B cell (primary cell): ENCODE measurements at regions of chr2 and their contacts with region 1.

Region 1: DNA sequence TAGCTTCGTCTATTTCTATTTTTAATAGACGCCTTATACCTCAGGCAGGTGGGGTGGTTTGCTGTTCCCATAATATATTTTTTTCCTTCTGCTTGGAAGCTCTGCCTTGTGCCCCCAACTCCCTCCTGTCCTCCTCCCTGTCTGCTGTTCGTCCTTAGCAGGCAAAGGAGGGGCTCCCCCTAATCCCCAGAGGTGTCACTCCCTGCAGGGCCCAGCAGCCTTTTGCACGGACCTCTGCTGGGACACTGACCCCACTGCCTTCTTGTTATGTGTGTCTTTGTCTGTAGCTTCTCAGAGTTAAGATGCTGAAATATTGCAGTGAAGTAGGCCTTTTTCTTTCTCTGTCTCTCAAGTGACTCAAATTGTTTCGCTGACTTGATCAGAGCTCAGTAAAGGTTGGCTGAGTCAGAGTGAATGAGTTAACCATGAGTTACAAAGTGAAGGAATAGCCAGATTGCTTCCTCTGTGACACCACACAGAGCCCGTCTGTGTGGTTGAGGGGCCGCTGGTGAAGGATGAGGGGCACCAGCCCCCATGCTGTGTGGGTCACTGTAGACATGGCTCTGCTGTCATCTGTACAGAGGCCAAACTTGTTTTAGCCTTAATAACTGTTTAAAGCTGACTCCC is 47.7 kb downstream of the PRKCE start:
- DNase-seq: no peak
- ATAC-seq: peak; percentile 13
- H3K4me3 ChIP-seq: no peak overlapping the region
- H3K4me3 Mint-ChIP-seq: peak overlapping the region; percentile 75
- H3K27ac ChIP-seq: peak overlapping the region; percentile 39 to 71
- H3K27ac Mint-ChIP-seq: peak overlapping the region; percentile 87
- H3K4me1 ChIP-seq: peaks cover 60 to 66% of the 10 kb centered on the region in 2 donors
- H3K4me1 Mint-ChIP-seq: peaks cover 63% of the 10 kb centered on the region
- H3K27me3 ChIP-seq: no peaks in the 10 kb centered on the region
- H3K27me3 Mint-ChIP-seq: no peaks in the 10 kb centered on the region
- CTCF ChIP-seq: no peak

Region 2: DNA sequence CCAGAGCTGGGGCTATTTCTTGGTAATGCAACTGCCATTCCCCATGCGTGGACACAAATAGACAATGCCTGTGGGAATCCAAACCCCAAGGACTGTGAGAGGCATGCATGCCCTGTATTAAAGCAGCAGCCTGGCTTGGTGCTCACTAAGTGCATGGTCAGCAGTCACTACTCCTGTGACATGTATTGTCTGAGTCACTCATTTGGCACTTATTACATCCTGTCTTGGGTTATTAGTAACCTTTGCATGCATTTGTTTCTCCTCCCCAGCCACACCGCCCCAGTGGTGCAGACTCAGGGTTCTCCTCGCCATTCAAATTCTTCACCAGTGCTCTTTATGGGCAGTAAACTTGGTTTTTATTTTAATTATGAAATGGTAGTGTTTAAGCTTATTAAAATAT is 17.5 kb before region 1 on chr2:
- CTCF ChIA-PET with region 1: no interaction called
- POLR2A ChIA-PET with region 1: no interaction called
- intact Hi-C with region 1: loop called (anchors 2 kb)
- DNase-seq: no peak
- ATAC-seq: peak; percentile 79
- H3K4me3 ChIP-seq: no peak overlapping the region
- H3K4me3 Mint-ChIP-seq: no peak overlapping the region
- H3K27ac ChIP-seq: no peak overlapping the region
- H3K27ac Mint-ChIP-seq: no peak overlapping the region
- H3K4me1 ChIP-seq: peaks cover 6% of the 10 kb centered on the region in 2 donors
- H3K4me1 Mint-ChIP-seq: peaks cover 50% of the 10 kb centered on the region
- H3K27me3 ChIP-seq: no peaks in the 10 kb centered on the region
- H3K27me3 Mint-ChIP-seq: no peaks in the 10 kb centered on the region
- CTCF ChIP-seq: no peak

Region 3: DNA sequence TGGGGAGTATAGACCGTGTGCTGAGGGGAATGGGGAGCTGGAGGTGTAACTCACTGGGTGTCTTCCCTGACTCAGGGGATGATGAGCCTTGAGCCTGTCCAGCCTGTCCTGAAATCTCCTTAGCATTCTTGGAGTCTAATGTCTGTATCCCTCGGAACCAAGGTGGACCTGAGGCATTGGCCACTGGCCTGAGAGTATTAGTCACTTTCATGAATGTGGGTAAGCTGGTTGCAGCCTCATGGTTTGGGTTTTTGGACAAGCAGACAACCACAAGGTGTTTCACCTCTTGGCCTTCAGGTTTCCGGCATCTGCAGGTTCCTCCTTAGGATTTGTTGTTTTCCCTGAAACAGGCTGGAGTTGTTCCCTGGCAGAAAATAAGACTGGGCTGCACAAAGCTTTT is 15.5 kb after region 1 on chr2:
- CTCF ChIA-PET with region 1: interaction called, 4 read pairs
- POLR2A ChIA-PET with region 1: no interaction called
- intact Hi-C with region 1: loop called (anchors 2 kb)
- DNase-seq: no peak
- ATAC-seq: no peak
- H3K4me3 ChIP-seq: no peak overlapping the region
- H3K4me3 Mint-ChIP-seq: no peak overlapping the region
- H3K27ac ChIP-seq: no peak overlapping the region
- H3K27ac Mint-ChIP-seq: no peak overlapping the region
- H3K4me1 ChIP-seq: peaks cover 9 to 20% of the 10 kb centered on the region in 2 donors
- H3K4me1 Mint-ChIP-seq: peaks cover 77% of the 10 kb centered on the region
- H3K27me3 ChIP-seq: no peaks in the 10 kb centered on the region
- H3K27me3 Mint-ChIP-seq: no peaks in the 10 kb centered on the region
- CTCF ChIP-seq: no peak